ENCODE measurements at regions of chr11 and their contacts with region 1.

Region 1: DNA sequence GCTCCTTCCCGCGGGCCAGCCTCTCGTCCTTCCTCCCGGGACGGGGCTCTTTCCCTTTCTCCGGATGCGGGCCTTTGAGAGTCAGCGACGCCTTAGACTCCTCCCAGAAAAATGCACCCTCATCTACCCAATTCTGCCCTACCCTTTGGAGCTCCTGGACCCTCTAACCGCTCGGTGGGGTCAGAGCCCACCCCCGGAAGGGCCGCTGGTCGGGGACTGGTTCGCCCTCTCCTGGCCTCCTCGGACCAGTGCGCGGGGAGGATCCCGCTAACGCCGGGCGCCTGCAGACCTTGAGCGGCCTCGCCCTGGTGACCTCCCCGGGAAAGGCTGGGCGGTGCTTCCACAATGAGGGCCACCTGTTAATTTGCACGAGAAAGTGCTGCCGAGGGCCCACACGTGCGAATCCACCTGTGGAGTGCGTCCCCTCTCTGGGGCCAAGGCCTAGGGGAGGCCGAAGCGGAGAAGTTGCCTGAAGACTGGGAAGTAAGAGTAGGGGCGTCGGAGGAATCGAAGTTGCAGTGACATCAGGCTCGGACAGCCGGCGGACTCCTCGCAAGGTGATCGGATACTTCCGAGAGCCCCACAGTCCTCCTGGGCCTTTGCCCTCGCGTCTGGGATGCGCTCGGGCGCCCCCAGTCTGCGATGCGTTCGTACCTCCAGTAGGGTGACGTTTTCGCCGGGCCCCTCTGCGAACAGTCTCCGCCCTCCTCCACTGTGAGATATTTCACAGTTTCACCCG is 61.5 kb downstream of the ENDOD1 start:
- DNase-seq: peak; percentile 98
- H3K4me3 ChIP-seq: peak overlapping the region; percentile 60 to 67 (median 64)
- H3K27ac ChIP-seq: peak overlapping the region; percentile 84 to 88 (median 84)
- H3K4me1 ChIP-seq: peaks cover 29 to 67% (median 56%) of the 10 kb centered on the region in 4 donors
- H3K27me3 ChIP-seq: no peaks in the 10 kb centered on the region
- CTCF ChIP-seq: peak; percentile 71 to 94 (median 81)
- EP300 ChIP-seq: no peak
- POLR2A ChIP-seq: peak; percentile 44

Region 2: GRCh38 chr11:94973099-94973968 is 177.8 kb before region 1 on chr11 and contains the starts of genes CWC15 and KDM4D:
- intact Hi-C with region 1: loop called (anchors 5 kb)
- DNase-seq: peak; percentile 98
- H3K4me3 ChIP-seq: peak within 1 kb of the TSS; percentile 70 to 89 (median 76)
- H3K27ac ChIP-seq: peak within 1 kb of the TSS; percentile 75 to 85 (median 82)
- H3K4me1 ChIP-seq: peaks cover 10 to 25% (median 16%) of the 10 kb centered on the region in 4 donors
- H3K27me3 ChIP-seq: no peaks in the 10 kb centered on the region
- CTCF ChIP-seq: no peak
- EP300 ChIP-seq: no peak
- POLR2A ChIP-seq: no peak
- total RNA-seq, gene CWC15: 22.9 to 40.3 (median 27.0) TPM
- total RNA-seq, gene KDM4D: under 0.01 to 0.58 (median 0.40) TPM

Region 3: DNA sequence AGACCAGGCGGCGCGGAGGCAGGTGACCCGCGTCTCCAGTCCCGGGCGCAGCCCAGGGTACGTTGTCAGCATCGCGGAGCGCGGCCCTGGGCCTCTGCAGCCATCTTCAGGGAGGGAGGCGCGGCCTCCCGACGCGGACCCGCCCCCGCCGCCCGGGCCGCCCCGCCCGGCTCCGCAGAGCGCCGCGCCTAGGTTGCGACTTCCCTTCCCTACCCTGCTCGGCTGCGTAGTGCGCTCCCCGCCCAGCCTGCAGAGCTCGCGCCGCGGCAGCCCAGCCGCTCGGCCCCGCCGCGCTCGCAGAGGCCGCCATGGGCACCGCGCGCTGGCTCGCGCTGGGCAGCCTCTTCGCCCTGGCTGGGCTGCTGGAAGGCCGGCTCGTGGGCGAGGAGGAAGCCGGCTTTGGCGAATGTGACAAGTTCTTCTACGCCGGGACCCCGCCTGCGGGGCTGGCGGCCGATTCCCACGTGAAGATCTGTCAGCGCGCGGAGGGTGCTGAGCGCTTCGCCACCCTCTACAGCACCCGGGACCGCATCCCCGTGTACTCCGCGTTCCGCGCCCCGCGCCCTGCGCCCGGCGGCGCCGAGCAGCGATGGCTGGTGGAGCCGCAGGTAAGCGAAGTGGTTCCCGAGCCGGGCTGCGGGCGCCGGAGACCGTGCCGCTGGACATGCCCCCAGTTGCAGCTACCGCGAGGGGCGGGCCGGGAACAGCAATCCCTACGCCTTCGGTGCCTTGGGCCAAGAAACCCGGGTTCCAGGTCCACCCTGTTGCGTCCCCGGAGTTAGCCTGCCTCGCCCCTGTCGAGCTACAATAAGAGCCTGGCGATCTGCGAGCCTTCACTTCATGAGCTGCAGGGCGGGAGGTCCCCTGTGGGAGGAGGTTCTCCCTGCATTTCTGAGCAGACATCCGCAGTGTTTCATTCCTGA is 61.2 kb before region 1 on chr11 and contains the start of gene ENDOD1:
- intact Hi-C with region 1: loop called (anchors 5 kb)
- DNase-seq: peak; percentile 90
- H3K4me3 ChIP-seq: peak within 1 kb of the TSS; percentile 84 to 98 (median 91)
- H3K27ac ChIP-seq: peak within 1 kb of the TSS; percentile 93 to 95 (median 94)
- H3K4me1 ChIP-seq: peaks cover 14 to 45% (median 39%) of the 10 kb centered on the region in 4 donors
- H3K27me3 ChIP-seq: no peaks in the 10 kb centered on the region
- CTCF ChIP-seq: peak in 1 of 3 experiments; percentile 11
- EP300 ChIP-seq: no peak
- POLR2A ChIP-seq: no peak
- total RNA-seq, gene ENDOD1: 37.6 to 43.2 (median 41.0) TPM

Region 4: GRCh38 chr11:95337175-95337957 is 186.3 kb after region 1 on chr11:
- intact Hi-C with region 1: loop called (anchors 10 kb)
- DNase-seq: peak; percentile 92
- H3K4me3 ChIP-seq: peak overlapping the region; percentile 13 to 32 (median 25)
- H3K27ac ChIP-seq: peak overlapping the region; percentile 82 to 88 (median 86)
- H3K4me1 ChIP-seq: peaks cover 33 to 52% (median 43%) of the 10 kb centered on the region in 4 donors
- H3K27me3 ChIP-seq: no peaks in the 10 kb centered on the region
- CTCF ChIP-seq: no peak
- EP300 ChIP-seq: no peak
- POLR2A ChIP-seq: no peak

Region 5: DNA sequence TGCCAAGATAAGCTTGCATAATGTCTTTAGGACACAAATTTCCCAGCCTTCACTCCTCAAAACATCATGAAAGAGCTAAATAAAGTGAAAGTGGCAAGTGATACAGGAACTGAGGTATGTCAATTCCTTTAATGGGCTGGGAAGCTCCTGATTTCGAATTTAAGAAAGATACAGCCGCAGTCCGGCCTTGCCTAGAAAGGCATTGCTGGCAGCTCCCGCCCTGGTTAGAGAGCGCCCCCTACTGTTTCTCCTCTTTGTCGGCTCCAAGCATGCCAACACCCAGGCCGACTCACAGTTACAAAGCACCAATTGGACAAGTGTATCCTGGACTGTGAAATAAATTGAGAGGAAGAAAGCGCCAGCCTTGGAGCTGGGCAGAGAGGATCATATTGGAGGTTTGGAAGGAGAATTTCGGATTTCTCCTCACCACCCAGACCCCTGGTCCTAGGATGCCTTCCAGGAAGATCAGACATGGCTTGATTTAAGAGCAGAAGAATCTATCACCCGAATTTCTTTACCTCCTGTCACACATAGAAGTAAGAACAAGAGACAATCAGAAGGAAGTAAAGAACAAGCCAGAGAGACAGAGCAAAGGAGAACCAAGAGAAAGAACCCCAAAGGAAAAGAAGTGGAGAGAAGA is 554.5 kb after region 1 on chr11:
- intact Hi-C with region 1: loop called (anchors 1 kb)
- DNase-seq: peak; percentile 95
- H3K4me3 ChIP-seq: no peak overlapping the region
- H3K27ac ChIP-seq: peak overlapping the region; percentile 67 to 79 (median 68)
- H3K4me1 ChIP-seq: peaks cover 12 to 57% (median 53%) of the 10 kb centered on the region in 4 donors
- H3K27me3 ChIP-seq: no peaks in the 10 kb centered on the region
- CTCF ChIP-seq: peak; percentile 90 to 93 (median 91)
- EP300 ChIP-seq: no peak
- POLR2A ChIP-seq: no peak

Measured in esophagus muscularis mucosa (tissue), 4 donors.